ENCODE measurements at regions of chr2 and their contacts with region 1.

Region 1: GRCh38 chr2:203782262-203782976 is 76.0 kb downstream of the CD28 start:
- DNase-seq: peak; percentile 89
- H3K4me3 Mint-ChIP-seq: no peak overlapping the region
- H3K27ac Mint-ChIP-seq: peak overlapping the region; percentile 81
- H3K4me1 Mint-ChIP-seq: peaks cover 50% of the 10 kb centered on the region
- H3K27me3 Mint-ChIP-seq: no peaks in the 10 kb centered on the region

Region 2: GRCh38 chr2:203578759-203579643 is 203.4 kb before region 1 on chr2:
- intact Hi-C with region 1: loop called (anchors 1 kb)
- DNase-seq: peak; percentile 87
- H3K4me3 Mint-ChIP-seq: peak overlapping the region; percentile 37
- H3K27ac Mint-ChIP-seq: peak overlapping the region; percentile 59
- H3K4me1 Mint-ChIP-seq: peaks cover 28% of the 10 kb centered on the region
- H3K27me3 Mint-ChIP-seq: peaks cover 37% of the 10 kb centered on the region

Region 3: GRCh38 chr2:203673933-203674332 is 108.5 kb before region 1 on chr2:
- intact Hi-C with region 1: loop called (anchors 1 kb)
- DNase-seq: peak; percentile 83
- H3K4me3 Mint-ChIP-seq: peak overlapping the region; percentile 63
- H3K27ac Mint-ChIP-seq: peak overlapping the region; percentile 89
- H3K4me1 Mint-ChIP-seq: peaks cover 27% of the 10 kb centered on the region
- H3K27me3 Mint-ChIP-seq: no peaks in the 10 kb centered on the region

Region 4: GRCh38 chr2:203740780-203741281 is 41.6 kb before region 1 on chr2:
- intact Hi-C with region 1: loop called (anchors 1 kb)
- DNase-seq: peak; percentile 89
- H3K4me3 Mint-ChIP-seq: peak overlapping the region; percentile 69
- H3K27ac Mint-ChIP-seq: peak overlapping the region; percentile 96
- H3K4me1 Mint-ChIP-seq: peaks cover 72% of the 10 kb centered on the region
- H3K27me3 Mint-ChIP-seq: no peaks in the 10 kb centered on the region

Region 5: GRCh38 chr2:203763938-203764664 is 18.3 kb before region 1 on chr2:
- intact Hi-C with region 1: loop called (anchors 1 kb)
- DNase-seq: peak; percentile 55
- H3K4me3 Mint-ChIP-seq: peak overlapping the region; percentile 19
- H3K27ac Mint-ChIP-seq: peak overlapping the region; percentile 89
- H3K4me1 Mint-ChIP-seq: peaks cover 62% of the 10 kb centered on the region
- H3K27me3 Mint-ChIP-seq: no peaks in the 10 kb centered on the region

Measured in activated CD4-positive, alpha-beta T cell treated with anti-CD3 and anti-CD28 coated beads, Interleukin-2, amount 10 ng/mL, durations not matched to agents 24 days and 14 days (primary cell).